HepG2 (cell line): ENCODE measurements at regions of chr2 and their contacts with region 1.

Region 1: DNA sequence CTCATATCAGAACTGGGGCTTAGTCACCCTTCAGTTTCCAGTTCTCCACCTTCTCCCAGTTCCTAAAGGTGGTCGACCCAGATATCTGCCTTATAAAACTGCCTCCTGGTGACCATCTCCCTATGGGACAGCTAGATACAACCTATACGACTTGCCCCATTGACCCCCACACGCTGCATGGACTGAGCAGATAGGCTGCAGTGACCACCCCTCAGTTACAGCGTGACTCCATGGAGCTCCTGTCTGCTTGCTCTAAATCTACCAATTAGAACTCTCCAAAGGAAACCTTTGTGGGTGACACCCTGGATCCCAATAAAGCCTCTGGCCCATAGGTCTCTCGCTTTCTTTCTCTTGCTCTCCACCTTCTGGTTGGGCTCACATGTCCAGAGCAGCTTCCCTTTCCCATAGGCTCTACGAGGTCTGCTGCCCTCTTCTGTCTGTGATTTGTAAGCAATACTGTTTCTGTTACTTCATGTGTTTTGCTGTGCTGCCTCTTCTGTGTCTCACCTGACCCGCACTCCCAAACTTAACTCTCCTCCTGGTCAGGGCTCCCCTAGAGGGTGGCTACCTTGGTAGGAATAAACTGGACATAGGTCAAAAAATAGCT is 971.3 kb upstream of the FAM98A start:
- DNase-seq: peak; percentile 53
- ATAC-seq: peak; percentile 98
- H3K4me3 ChIP-seq: no peak overlapping the region
- H3K27ac ChIP-seq: no peak overlapping the region
- H3K4me1 ChIP-seq: no peaks in the 10 kb centered on the region
- H3K27me3 ChIP-seq: no peaks in the 10 kb centered on the region
- CTCF ChIP-seq: peak; percentile 66
- EP300 ChIP-seq: no peak
- POLR2A ChIP-seq: no peak
- RAD21 ChIP-seq: peak; percentile 37; the same call in 1 of the 2 replicates

Region 2: GRCh38 chr2:34012715-34013302 is 557.6 kb before region 1 on chr2:
- CTCF ChIA-PET with region 1: interaction called, 4 read pairs
- POLR2A ChIA-PET with region 1: no interaction called
- in situ Hi-C with region 1: no loop called
- intact Hi-C with region 1: loop called (anchors 2 kb)
- DNase-seq: peak; percentile 53
- ATAC-seq: peak; percentile 98
- H3K4me3 ChIP-seq: no peak overlapping the region
- H3K27ac ChIP-seq: no peak overlapping the region
- H3K4me1 ChIP-seq: no peaks in the 10 kb centered on the region
- H3K27me3 ChIP-seq: no peaks in the 10 kb centered on the region
- CTCF ChIP-seq: peak; percentile 85
- EP300 ChIP-seq: no peak
- POLR2A ChIP-seq: no peak
- RAD21 ChIP-seq: peak; percentile 68